Mammary epithelial cell (primary cell): ENCODE measurements at regions of chr7 and their contacts with region 1.

Region 1: DNA sequence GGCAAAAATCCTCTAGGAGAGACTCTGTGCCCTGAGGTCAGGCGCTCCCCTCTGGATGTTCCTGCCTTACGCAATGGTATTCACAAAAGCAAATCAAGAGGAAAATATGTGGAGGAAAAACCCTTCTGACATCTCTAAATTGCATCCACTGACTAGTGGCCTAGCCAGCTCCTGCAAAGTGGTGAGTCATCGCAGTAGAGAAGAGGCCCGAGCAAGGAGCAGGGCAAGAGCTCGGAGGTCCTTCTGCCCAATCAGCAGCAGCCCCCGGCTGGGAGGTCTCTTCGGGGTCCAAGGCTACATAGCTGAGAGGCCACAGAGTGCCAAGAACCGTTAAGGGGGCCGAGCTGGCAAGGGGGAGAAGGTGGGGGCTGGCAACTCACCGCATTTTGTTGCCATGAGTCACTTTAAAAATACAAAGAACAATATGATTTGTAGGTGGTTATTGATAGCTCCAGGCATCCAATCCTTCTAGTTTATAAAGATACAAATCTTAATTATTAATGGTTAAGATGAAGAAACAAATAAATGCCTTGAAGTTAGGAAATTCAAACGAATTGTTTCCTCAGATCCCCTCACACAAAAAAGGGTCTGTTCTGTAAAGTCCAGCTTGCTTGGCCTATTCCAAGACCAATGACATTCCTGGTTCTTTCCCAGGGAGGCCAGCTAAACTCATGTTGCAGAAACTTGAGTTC is 161.6 kb downstream of the PKD1L1 start:
- DNase-seq: peak; percentile 99
- H3K4me3 ChIP-seq: no peak overlapping the region
- H3K27ac ChIP-seq: peak overlapping the region; percentile 98
- H3K4me1 ChIP-seq: peaks cover 55% of the 10 kb centered on the region
- H3K27me3 ChIP-seq: no peaks in the 10 kb centered on the region
- CTCF ChIP-seq: no peak

Region 2: DNA sequence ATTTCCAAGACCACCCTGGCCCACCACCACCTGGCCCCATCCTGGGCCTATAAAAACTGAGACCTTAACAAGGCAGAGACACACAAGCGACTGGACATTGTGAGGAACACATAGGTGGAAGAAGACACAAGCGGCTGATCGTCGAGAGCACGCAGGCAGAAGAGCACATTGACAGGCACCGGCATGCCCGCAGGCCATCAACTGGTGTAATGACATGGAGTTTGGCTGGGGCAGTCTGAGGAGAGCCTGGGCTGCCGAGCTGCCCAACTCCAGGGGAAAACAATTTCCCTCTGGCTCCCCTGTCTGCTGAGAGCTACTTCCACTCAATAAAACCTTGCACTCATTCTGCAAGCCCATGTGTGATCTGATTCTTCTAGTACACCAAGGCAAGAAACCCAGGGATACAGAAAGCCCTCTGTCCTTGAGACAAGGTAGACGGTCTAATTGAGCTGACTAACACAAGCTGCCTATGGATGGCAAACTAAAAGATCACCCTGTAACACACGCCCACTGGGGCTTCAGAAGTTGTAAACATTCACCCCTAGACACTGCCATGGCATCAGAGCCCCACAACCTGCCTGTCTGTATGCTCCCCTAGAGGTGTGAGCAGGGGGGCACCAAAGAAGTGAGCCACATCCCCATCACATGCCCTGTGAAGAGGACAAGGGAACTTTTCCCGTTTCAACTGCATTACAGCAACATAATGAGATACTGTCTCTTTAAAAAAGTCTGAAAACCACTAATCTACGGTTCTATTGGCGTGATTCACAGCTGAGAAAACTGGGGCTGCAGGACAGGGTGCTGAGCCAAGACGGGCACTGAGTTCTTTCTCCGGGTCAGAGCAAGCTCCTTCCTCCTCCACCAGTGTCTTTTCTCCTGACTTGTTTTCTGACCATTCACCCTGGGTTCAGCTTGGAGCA is 186.2 kb before region 1 on chr7:
- CTCF ChIA-PET with region 1: no interaction called
- dilution Hi-C with region 1: no loop called
- in situ Hi-C with region 1: no loop called
- intact Hi-C with region 1: loop called (anchors 2 kb)
- DNase-seq: peak; percentile 81
- H3K4me3 ChIP-seq: peak overlapping the region in 1 of 3 experiments; percentile 8
- H3K27ac ChIP-seq: peak overlapping the region; percentile 84
- H3K4me1 ChIP-seq: peaks cover 47% of the 10 kb centered on the region
- H3K27me3 ChIP-seq: no peaks in the 10 kb centered on the region
- CTCF ChIP-seq: no peak

Region 3: GRCh38 chr7:47738563-47739166 is 48.0 kb before region 1 on chr7:
- CTCF ChIA-PET with region 1: no interaction called
- dilution Hi-C with region 1: no loop called
- in situ Hi-C with region 1: no loop called
- intact Hi-C with region 1: loop called (anchors 2 kb)
- DNase-seq: no peak
- H3K4me3 ChIP-seq: no peak overlapping the region
- H3K27ac ChIP-seq: no peak overlapping the region
- H3K4me1 ChIP-seq: peaks cover 2% of the 10 kb centered on the region
- H3K27me3 ChIP-seq: no peaks in the 10 kb centered on the region
- CTCF ChIP-seq: no peak